PC-9 (cell line): ENCODE measurements at regions of chr2 and their contacts with region 1.

Region 1: DNA sequence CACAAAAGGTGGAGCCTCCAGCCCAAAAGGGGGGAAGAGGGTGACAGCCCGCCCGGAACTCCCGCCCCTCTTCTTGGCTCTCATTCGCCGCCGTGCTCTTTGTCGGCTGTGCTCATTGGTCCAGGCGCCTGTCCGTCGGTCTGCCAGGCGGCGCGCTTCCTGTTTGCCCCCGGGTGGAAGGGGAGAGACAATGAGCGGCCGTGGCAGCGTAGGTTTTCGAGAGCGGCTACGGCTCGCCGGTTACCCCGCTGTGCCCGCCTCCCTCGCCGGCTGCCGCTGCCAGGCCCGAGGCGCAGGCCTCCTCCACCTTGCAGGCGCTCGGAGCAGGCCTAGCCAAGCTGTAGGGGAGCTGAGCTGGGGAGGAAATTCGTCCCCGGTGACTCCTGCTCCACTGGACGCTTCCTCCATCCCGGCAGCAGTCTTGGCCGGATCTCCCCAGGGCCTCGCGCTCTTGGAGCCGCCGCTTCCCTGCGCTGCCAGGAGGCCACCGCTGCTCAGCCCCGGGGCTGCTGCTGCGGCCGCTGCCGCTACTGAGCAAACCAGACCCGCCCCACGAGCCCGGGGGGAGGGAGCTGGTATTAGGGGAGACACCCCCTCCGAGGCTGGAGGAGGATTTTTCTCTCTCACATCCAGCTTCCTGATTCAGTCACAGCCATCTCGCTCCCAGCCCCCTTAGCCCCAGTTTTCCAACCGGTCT is at the start of gene SP3:
- DNase-seq: peak; percentile 97 to 99
- H3K4me3 ChIP-seq: peak within 1 kb of the TSS; percentile 70
- H3K27ac ChIP-seq: peak within 1 kb of the TSS; percentile 85
- H3K4me1 ChIP-seq: peaks cover 43% of the 10 kb centered on the region
- H3K27me3 ChIP-seq: no peaks in the 10 kb centered on the region
- CTCF ChIP-seq: no peak
- total RNA-seq, gene SP3: 93.6 and 127 TPM in 2 replicates

Region 2: GRCh38 chr2:173402405-173402974 is 563.0 kb before region 1 on chr2:
- CTCF ChIA-PET with region 1: no interaction called
- POLR2A ChIA-PET with region 1: no interaction called
- intact Hi-C with region 1: loop called (anchors 10 kb)
- DNase-seq: peak; percentile 79 to 88
- H3K4me3 ChIP-seq: peak overlapping the region; percentile 38; the same call in 1 of the 2 replicates
- H3K27ac ChIP-seq: no peak overlapping the region
- H3K4me1 ChIP-seq: peaks cover 11% of the 10 kb centered on the region; the same call in 1 of the 2 replicates
- H3K27me3 ChIP-seq: peaks cover 24% of the 10 kb centered on the region; the same call in 1 of the 2 replicates
- CTCF ChIP-seq: peak; percentile 99

Region 3: GRCh38 chr2:173734797-173735196 is 230.7 kb before region 1 on chr2:
- CTCF ChIA-PET with region 1: no interaction called
- POLR2A ChIA-PET with region 1: interaction called, 23 read pairs
- intact Hi-C with region 1: no loop called
- DNase-seq: no peak
- H3K4me3 ChIP-seq: no peak overlapping the region
- H3K27ac ChIP-seq: no peak overlapping the region
- H3K4me1 ChIP-seq: no peaks in the 10 kb centered on the region
- H3K27me3 ChIP-seq: peaks cover 9% of the 10 kb centered on the region; the same call in 1 of the 2 replicates
- CTCF ChIP-seq: no peak

Region 4: DNA sequence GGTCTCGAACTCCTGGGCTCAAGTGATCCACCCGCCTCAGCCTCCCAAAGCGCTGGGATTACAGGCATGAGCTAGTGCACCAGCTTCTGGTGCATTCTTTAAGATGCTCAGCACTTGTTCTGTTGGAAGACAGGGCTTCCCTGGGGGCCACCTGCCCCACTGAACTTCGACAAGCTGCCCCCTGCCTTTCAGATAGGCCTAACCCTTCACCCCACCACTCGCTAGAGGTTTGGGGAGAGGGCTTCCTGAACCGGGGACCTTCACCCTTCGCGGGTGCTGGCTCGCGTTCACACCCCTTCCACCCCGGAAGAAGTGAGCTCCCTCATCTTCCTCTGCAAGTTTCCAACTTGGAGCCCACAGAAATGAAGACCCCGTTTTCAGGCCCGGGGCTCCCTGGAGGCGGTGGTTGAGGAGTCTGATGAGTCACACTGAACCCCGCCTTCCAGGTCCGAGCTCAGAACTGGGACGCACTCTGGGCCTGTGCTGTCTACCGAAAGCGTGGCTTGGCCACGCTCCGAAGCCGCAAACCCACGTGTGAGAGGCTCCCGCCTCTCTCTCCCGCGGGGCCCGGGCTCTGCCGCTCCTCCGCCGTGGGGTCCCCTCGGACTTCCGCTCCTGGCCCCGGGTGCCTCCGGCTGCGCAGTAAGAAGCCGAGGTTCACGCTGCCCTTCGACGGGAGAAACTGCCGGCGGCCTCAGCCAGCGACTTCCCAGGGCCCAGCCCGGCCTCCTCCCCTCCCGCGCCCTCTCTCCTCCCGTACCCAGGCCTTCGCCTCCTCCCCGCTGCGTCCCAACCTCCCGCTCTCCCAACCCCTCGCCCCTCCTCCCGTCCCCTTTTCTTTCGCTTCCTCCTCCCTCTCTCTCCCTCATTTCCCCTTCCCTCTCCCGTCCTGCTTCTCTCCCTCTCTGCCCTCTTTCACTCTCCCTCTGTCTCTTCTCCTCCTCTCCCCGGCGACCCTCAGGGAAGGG is 47.2 kb after region 1 on chr2:
- CTCF ChIA-PET with region 1: no interaction called
- POLR2A ChIA-PET with region 1: interaction called, 6 read pairs
- intact Hi-C with region 1: loop called (anchors 2 kb)
- DNase-seq: peak in 1 of 2 experiments; percentile 81
- H3K4me3 ChIP-seq: no peak overlapping the region
- H3K27ac ChIP-seq: no peak overlapping the region
- H3K4me1 ChIP-seq: no peaks in the 10 kb centered on the region
- H3K27me3 ChIP-seq: no peaks in the 10 kb centered on the region
- CTCF ChIP-seq: no peak

Region 5: DNA sequence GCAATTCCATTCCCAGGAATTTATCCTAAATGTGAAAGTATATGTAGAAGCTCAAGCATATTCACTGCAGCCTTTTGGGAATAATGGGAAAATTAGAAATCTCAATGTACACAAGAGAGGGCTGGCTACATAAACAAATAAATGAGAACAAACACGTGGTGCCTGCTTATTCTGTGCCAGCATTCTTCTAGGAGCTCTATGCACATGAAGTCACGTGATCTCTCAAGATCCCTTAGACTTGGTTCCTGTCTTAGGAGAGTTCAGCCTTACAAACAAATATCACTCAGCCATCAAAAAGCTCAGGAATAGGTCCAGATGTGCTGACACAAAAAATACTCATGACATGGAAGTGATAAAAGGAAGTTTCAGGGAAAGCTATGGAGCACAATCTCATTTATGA is 92.5 kb after region 1 on chr2:
- CTCF ChIA-PET with region 1: no interaction called
- POLR2A ChIA-PET with region 1: interaction called, 11 read pairs
- intact Hi-C with region 1: loop called (anchors 5 kb)
- DNase-seq: no peak
- H3K4me3 ChIP-seq: no peak overlapping the region
- H3K27ac ChIP-seq: no peak overlapping the region
- H3K4me1 ChIP-seq: 0 out of 2 replicates have a peak, but pooled peaks cover under 1% of the 10 kb centered on the region
- H3K27me3 ChIP-seq: no peaks in the 10 kb centered on the region
- CTCF ChIP-seq: no peak

Region 6: GRCh38 chr2:174166281-174166680 is 200.8 kb after region 1 on chr2:
- CTCF ChIA-PET with region 1: no interaction called
- POLR2A ChIA-PET with region 1: no interaction called
- intact Hi-C with region 1: no loop called
- DNase-seq: no peak
- H3K4me3 ChIP-seq: no peak overlapping the region
- H3K27ac ChIP-seq: no peak overlapping the region
- H3K4me1 ChIP-seq: no peaks in the 10 kb centered on the region
- H3K27me3 ChIP-seq: no peaks in the 10 kb centered on the region
- CTCF ChIP-seq: no peak

Region 7: GRCh38 chr2:174846941-174847938 is 881.8 kb after region 1 on chr2:
- CTCF ChIA-PET with region 1: no interaction called
- POLR2A ChIA-PET with region 1: interaction called, 28 read pairs
- intact Hi-C with region 1: no loop called
- DNase-seq: peak; percentile 50 to 81
- H3K4me3 ChIP-seq: no peak overlapping the region
- H3K27ac ChIP-seq: no peak overlapping the region
- H3K4me1 ChIP-seq: peaks cover 16% of the 10 kb centered on the region
- H3K27me3 ChIP-seq: no peaks in the 10 kb centered on the region
- CTCF ChIP-seq: no peak